Common myeloid progenitor, CD34-positive (primary cell): ENCODE measurements at regions of chr1 and their contacts with region 1.

Region 1: GRCh38 chr1:36149237-36149972 is at the start of gene TRAPPC3:
- DNase-seq: peak; percentile 99 to 100 (median 100)
- H3K4me3 ChIP-seq: peak within 1 kb of the TSS; percentile 44 to 92 (median 75)
- H3K27ac ChIP-seq: peak within 1 kb of the TSS; percentile 81 to 95
- H3K4me1 ChIP-seq: peaks cover 16 to 53% (median 49%) of the 10 kb centered on the region in 4 experiments
- H3K27me3 ChIP-seq: no peaks in the 10 kb centered on the region

Region 2: DNA sequence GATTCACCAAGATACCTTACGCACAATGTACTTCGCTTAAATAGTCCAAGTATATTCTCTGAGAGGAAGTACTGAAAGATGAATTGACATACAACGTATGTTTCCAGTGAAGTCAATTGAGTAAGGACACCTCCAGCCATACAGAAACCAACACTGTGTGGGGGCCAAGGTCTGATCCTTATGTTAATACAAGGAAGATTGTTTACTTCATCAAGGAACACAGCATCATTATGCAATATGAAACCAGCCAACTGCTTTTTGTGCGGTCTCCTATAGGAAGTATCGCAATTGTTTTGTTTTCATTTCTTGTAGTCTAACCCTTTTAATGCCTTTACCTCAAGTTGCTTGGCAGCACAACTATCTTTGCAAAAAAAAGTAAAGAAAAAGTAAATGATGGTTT is 93.7 kb before region 1 on chr1:
- CTCF ChIA-PET with region 1: no interaction called
- POLR2A ChIA-PET with region 1: no interaction called
- DNase-seq: no peak
- H3K4me3 ChIP-seq: peak overlapping the region in 1 of 7 experiments; percentile 8
- H3K27ac ChIP-seq: no peak overlapping the region
- H3K4me1 ChIP-seq: no peaks in the 10 kb centered on the region
- H3K27me3 ChIP-seq: no peaks in the 10 kb centered on the region

Region 3: DNA sequence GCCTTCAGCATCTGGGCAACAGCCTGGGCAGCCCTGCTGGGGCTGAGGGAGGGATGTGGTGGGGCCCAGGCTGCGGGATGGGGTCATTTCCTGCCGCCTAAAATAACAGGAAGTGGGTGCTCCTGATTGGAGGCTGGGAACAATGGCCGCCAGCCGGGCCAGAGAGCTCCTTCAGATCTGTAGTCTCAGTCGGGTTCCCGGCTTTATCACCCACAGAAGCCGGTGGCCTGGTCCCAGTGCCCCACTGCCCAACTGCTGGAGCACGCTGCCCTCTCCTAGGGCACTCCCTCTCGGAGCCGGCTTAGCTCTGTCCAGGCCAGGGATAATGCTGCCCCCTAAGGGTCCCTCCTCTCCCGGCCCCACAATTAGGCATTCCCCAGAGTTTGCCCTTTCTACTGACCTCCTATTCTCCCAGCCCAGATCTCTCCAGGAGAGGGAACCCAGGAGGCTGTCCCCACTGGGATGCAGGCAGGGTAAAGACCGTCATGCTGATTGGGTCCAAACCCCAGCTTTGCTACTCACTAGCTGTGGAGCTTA is 11.6 kb after region 1 on chr1:
- CTCF ChIA-PET with region 1: interaction called, 98 read pairs
- POLR2A ChIA-PET with region 1: interaction called, 36 read pairs
- DNase-seq: peak; percentile 64 to 91 (median 89)
- H3K4me3 ChIP-seq: peak overlapping the region in 6 of 7 experiments; percentile 52 to 66 (median 62)
- H3K27ac ChIP-seq: peak overlapping the region; percentile 77 to 86
- H3K4me1 ChIP-seq: peaks cover 21 to 62% (median 57%) of the 10 kb centered on the region in 4 experiments
- H3K27me3 ChIP-seq: no peaks in the 10 kb centered on the region

Region 4: DNA sequence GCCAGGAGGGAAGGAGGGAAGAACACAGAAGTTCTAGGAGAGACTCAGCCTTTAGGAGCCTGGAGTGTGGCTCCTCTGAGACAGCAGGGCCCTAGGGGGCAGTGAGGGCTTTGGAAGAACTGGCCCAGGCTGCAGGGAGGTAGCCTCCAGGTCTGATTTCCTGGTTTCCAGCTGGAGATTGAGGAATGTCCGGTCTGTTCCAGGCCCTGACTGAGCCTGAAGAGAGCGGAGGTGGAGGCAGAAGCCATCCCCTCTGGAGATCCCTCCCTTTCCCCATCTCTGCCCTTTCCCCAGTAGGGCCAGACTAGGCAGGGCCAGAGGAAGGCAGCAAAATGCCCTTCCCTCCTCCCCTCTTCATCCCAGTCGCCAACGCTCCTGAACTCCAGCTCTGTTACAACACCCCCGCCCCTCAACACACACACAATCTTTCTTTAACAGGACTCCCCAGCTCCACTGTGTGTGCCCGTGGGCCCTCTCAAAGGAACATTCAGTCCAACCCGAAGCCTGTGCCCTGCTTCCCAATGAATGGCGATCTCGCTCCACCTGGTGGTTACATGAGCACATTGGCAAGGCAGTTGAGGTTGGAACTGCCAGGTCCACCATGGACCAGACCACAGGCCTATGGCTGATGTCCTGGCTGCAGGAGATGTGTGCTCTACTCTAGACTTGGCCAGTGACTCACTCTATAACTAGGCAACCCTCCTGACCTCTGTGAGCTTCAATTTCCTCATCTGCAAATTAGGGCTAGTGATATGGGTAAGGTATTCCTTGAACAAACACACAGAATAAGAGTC is 38.6 kb after region 1 on chr1:
- CTCF ChIA-PET with region 1: interaction called, 134 read pairs
- POLR2A ChIA-PET with region 1: interaction called, 16 read pairs
- DNase-seq: peak; percentile 85 to 93 (median 90)
- H3K4me3 ChIP-seq: no peak overlapping the region
- H3K27ac ChIP-seq: peak overlapping the region in 1 of 2 experiments; percentile 27
- H3K4me1 ChIP-seq: peaks cover 0 to 4% (median 4%) of the 10 kb centered on the region in 4 experiments
- H3K27me3 ChIP-seq: no peaks in the 10 kb centered on the region

Region 5: DNA sequence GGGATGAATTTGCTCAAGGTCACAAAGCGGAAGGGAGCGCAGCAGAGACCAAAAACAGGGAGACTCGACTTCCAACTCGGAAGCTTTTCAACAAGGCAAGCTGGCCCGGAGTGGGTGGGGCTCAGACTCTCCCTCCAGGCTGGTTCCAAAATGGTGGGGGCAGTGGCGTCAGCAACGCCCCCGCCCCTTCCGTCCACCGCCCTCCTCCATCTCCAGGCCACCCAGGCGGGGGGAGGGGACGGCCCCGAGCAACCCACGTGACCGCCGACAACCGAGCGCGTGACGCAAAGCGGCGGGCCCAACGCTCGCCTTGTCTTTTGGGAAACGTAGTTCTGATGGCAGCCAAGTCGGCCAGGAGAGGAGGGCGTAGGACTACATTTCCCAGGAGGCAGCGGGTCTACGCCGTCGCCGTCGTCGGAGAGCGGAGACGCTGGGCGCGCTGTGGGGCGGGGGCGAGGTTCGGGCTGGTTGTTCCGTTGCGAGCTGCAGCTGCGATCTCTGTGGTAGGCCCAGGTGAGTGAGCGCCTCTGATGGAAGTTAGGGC is 74.7 kb after region 1 on chr1 and contains the start of gene THRAP3:
- CTCF ChIA-PET with region 1: interaction called, 20 read pairs
- POLR2A ChIA-PET with region 1: interaction called, 7 read pairs
- DNase-seq: peak; percentile 100
- H3K4me3 ChIP-seq: peak within 1 kb of the TSS; percentile 88 to 100 (median 93)
- H3K27ac ChIP-seq: peak within 1 kb of the TSS; percentile 95 to 100
- H3K4me1 ChIP-seq: peaks cover 19 to 33% (median 30%) of the 10 kb centered on the region in 4 experiments
- H3K27me3 ChIP-seq: no peaks in the 10 kb centered on the region

Region 6: GRCh38 chr1:36285448-36286101 is 136.2 kb after region 1 on chr1:
- CTCF ChIA-PET with region 1: interaction called, 39 read pairs
- POLR2A ChIA-PET with region 1: no interaction called
- DNase-seq: peak; percentile 90 to 97 (median 93)
- H3K4me3 ChIP-seq: no peak overlapping the region
- H3K27ac ChIP-seq: no peak overlapping the region
- H3K4me1 ChIP-seq: peaks cover 0 to 2% (median 0%) of the 10 kb centered on the region in 4 experiments
- H3K27me3 ChIP-seq: no peaks in the 10 kb centered on the region